HepG2 (cell line): ENCODE measurements at regions of chr14 and their contacts with region 1.

Region 1: GRCh38 chr14:75535164-75535898 is 13.1 kb downstream of the BATF start:
- DNase-seq: peak; percentile 31
- ATAC-seq: no peak
- H3K4me3 ChIP-seq: no peak overlapping the region
- H3K27ac ChIP-seq: peak overlapping the region; percentile 64
- H3K4me1 ChIP-seq: peaks cover 57% of the 10 kb centered on the region
- H3K27me3 ChIP-seq: no peaks in the 10 kb centered on the region
- CTCF ChIP-seq: no peak
- EP300 ChIP-seq: no peak
- POLR2A ChIP-seq: no peak
- RAD21 ChIP-seq: no peak

Region 2: DNA sequence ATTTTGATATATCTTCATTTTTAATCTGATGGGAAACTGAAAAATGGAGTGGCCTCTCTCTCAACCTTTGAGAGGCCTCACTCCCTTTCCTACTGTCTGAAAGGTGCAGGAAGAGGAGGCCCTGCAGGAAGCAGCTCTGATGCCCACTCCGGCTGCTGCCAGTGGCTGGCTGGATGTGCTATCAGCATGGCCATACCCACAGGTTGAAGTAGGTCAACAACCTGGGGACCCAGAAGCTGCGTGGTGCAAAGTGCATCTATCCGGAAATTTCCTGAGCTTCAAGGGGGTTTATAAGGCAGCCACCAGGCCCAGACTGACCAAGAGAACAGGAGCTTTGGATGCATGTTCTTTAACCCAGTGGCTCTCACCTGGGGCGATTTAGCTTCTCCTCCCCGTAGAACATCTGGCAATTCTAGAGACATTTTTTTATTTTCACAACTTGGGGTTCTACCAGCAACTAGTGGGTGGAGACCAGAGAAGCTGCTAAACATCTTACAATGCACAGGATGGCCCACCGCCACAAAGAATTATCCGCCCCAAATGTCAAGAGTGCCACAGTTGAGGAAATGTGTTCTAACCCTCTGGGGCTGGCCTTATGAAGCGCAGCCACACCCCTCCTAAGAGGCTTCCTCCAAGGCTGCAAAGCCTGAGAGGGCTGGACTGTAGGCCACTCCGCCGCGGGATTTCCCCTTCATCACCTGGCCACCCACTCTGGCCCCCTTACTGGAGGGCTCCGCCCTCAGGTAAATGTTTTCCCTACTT is 21.2 kb before region 1 on chr14:
- CTCF ChIA-PET with region 1: no interaction called
- POLR2A ChIA-PET with region 1: no interaction called
- in situ Hi-C with region 1: no loop called
- intact Hi-C with region 1: no loop called
- DNase-seq: no peak
- ATAC-seq: peak; percentile 48
- H3K4me3 ChIP-seq: peak overlapping the region in 1 of 3 experiments; percentile 68; a peak in 1 of 6 replicates
- H3K27ac ChIP-seq: no peak overlapping the region
- H3K4me1 ChIP-seq: peaks cover 24% of the 10 kb centered on the region
- H3K27me3 ChIP-seq: peaks cover 0 to 24% of the 10 kb centered on the region in 2 experiments; a peak in 2 of 5 replicates
- CTCF ChIP-seq: no peak
- EP300 ChIP-seq: no peak
- POLR2A ChIP-seq: no peak
- RAD21 ChIP-seq: no peak

Region 3: GRCh38 chr14:75549169-75549568 is 13.8 kb after region 1 on chr14:
- CTCF ChIA-PET with region 1: no interaction called
- POLR2A ChIA-PET with region 1: interaction called, 13 read pairs
- in situ Hi-C with region 1: no loop called
- intact Hi-C with region 1: no loop called
- DNase-seq: no peak
- ATAC-seq: no peak
- H3K4me3 ChIP-seq: no peak overlapping the region
- H3K27ac ChIP-seq: no peak overlapping the region
- H3K4me1 ChIP-seq: peaks cover 9% of the 10 kb centered on the region
- H3K27me3 ChIP-seq: peaks cover 0 to 11% of the 10 kb centered on the region in 2 experiments; a peak in 1 of 5 replicates
- CTCF ChIP-seq: no peak
- EP300 ChIP-seq: no peak
- POLR2A ChIP-seq: no peak
- RAD21 ChIP-seq: no peak